ENCODE measurements at regions of chr15 and their contacts with region 1.

Region 1: GRCh38 chr15:57861036-57861638 is 154.6 kb downstream of the POLR2M start:
- DNase-seq: peak; percentile 75
- H3K4me3 Mint-ChIP-seq: no peak overlapping the region
- H3K27ac Mint-ChIP-seq: no peak overlapping the region
- H3K4me1 Mint-ChIP-seq: peaks cover 19% of the 10 kb centered on the region
- H3K27me3 Mint-ChIP-seq: no peaks in the 10 kb centered on the region
- CTCF ChIP-seq: peak; percentile 69

Region 2: GRCh38 chr15:57611938-57612337 is 249.2 kb before region 1 on chr15:
- CTCF ChIA-PET with region 1: interaction called, 4 read pairs
- POLR2A ChIA-PET with region 1: no interaction called
- intact Hi-C with region 1: loop called (anchors 1 kb)
- DNase-seq: peak; percentile 84
- H3K4me3 Mint-ChIP-seq: no peak overlapping the region
- H3K27ac Mint-ChIP-seq: peak overlapping the region; percentile 35
- H3K4me1 Mint-ChIP-seq: peaks cover 51% of the 10 kb centered on the region
- H3K27me3 Mint-ChIP-seq: no peaks in the 10 kb centered on the region
- CTCF ChIP-seq: peak; percentile 51

Region 3: DNA sequence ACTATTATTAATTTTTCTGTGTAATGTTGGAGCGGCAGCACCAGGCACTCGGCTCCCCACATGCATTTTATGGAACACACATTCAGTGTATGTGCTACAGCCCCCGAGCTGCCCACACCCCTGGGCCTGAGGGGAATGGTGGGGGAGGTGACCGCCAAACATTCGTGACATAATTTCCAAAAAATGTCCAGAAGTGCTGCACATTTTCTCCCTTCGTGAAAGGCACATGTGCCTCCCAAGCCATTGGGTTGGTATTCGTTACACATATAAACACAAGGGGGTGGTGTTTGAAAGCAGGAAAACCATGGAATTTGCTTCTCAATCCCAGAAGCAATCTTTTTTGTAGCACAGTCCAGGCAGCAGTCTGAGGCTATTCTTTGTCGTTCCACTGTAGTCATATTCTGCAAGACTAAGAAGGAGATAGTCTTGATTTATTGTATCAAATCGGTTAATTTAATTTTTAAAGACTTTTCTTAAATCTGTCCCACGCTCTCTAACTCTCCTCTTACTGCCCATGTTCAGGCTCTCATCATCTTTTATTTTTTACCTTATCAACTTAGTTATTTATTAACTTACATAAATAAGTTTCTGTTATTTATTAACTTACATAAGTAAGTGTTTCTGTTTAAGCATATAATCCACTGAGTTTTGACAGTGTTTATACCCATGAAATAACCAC is 193.8 kb before region 1 on chr15:
- CTCF ChIA-PET with region 1: interaction called, 64 read pairs
- POLR2A ChIA-PET with region 1: interaction called, 3 read pairs
- intact Hi-C with region 1: loop called (anchors 1 kb)
- DNase-seq: peak; percentile 73
- H3K4me3 Mint-ChIP-seq: peak overlapping the region; percentile 43
- H3K27ac Mint-ChIP-seq: no peak overlapping the region
- H3K4me1 Mint-ChIP-seq: peaks cover 19% of the 10 kb centered on the region
- H3K27me3 Mint-ChIP-seq: no peaks in the 10 kb centered on the region
- CTCF ChIP-seq: peak; percentile 50

Region 4: GRCh38 chr15:57743424-57743823 is 117.7 kb before region 1 on chr15:
- CTCF ChIA-PET with region 1: interaction called, 138 read pairs
- POLR2A ChIA-PET with region 1: no interaction called
- intact Hi-C with region 1: no loop called
- DNase-seq: peak; percentile 14
- H3K4me3 Mint-ChIP-seq: no peak overlapping the region
- H3K27ac Mint-ChIP-seq: no peak overlapping the region
- H3K4me1 Mint-ChIP-seq: no peaks in the 10 kb centered on the region
- H3K27me3 Mint-ChIP-seq: no peaks in the 10 kb centered on the region
- CTCF ChIP-seq: no peak

Region 5: DNA sequence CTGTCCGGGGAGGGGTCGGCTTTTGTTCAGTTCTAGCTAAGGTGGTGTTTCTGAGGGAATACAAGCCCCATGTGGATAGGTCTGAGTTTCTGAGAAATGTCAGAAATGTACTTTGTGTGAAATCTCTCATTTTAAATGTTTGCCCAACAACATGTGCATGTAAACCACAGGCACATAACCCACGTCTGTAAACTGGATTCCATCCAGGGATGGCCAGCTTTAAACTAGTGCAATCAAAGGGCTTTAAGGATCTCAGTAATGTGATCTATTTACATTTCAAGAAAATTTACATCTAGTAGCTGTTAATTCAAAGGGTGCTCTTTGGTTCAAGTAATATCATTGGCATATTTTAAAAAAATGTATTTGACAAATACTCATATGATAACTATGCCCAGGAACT is 102.6 kb before region 1 on chr15:
- CTCF ChIA-PET with region 1: interaction called, 138 read pairs
- POLR2A ChIA-PET with region 1: no interaction called
- intact Hi-C with region 1: no loop called
- DNase-seq: peak; percentile 14
- H3K4me3 Mint-ChIP-seq: no peak overlapping the region
- H3K27ac Mint-ChIP-seq: no peak overlapping the region
- H3K4me1 Mint-ChIP-seq: no peaks in the 10 kb centered on the region
- H3K27me3 Mint-ChIP-seq: no peaks in the 10 kb centered on the region
- CTCF ChIP-seq: no peak